ENCODE measurements at regions of chr11 and their contacts with region 1.

Region 1: DNA sequence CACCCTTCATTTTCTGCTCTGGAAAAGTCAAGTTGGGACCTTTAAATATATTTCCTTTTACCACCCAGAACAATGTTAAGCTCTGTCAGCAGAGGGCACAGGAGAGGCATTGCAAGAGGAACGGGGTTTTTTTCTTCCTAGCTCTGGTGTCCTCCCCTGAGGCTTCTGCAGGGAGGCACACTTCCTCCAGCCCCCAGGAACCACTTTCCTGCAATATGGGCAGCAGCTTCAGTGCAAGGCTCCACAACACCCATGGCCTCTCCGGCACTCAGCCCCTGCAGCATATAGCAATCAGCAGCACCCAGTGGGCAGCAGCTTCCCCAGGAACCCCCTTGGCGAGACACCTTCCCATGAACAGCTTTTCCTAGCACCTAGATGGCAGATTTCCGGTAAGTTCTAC is 101.4 kb downstream of the SYT9 start:
- DNase-seq: peak; percentile 11 to 28 (median 16)
- ATAC-seq: peak; percentile 64; the same call in 2 of the 3 replicates
- H3K4me3 ChIP-seq: no peak overlapping the region
- H3K27ac ChIP-seq: no peak overlapping the region
- H3K4me1 ChIP-seq: no peaks in the 10 kb centered on the region
- H3K27me3 ChIP-seq: no peaks in the 10 kb centered on the region
- CTCF ChIP-seq: peak; percentile 39 to 59 (median 53); a peak in 5 of 6 replicates
- EP300 ChIP-seq: no peak
- POLR2A ChIP-seq: no peak
- RAD21 ChIP-seq: peak; percentile 66 to 72

Region 2: GRCh38 chr11:7341551-7341950 is 11.5 kb before region 1 on chr11:
- CTCF ChIA-PET with region 1: no interaction called
- POLR2A ChIA-PET with region 1: no interaction called
- in situ Hi-C with region 1: no loop called
- intact Hi-C with region 1: no loop called
- DNase-seq: no peak
- ATAC-seq: no peak
- H3K4me3 ChIP-seq: no peak overlapping the region
- H3K27ac ChIP-seq: no peak overlapping the region
- H3K4me1 ChIP-seq: no peaks in the 10 kb centered on the region
- H3K27me3 ChIP-seq: no peaks in the 10 kb centered on the region
- CTCF ChIP-seq: no peak
- EP300 ChIP-seq: no peak
- POLR2A ChIP-seq: no peak
- RAD21 ChIP-seq: no peak

Region 3: DNA sequence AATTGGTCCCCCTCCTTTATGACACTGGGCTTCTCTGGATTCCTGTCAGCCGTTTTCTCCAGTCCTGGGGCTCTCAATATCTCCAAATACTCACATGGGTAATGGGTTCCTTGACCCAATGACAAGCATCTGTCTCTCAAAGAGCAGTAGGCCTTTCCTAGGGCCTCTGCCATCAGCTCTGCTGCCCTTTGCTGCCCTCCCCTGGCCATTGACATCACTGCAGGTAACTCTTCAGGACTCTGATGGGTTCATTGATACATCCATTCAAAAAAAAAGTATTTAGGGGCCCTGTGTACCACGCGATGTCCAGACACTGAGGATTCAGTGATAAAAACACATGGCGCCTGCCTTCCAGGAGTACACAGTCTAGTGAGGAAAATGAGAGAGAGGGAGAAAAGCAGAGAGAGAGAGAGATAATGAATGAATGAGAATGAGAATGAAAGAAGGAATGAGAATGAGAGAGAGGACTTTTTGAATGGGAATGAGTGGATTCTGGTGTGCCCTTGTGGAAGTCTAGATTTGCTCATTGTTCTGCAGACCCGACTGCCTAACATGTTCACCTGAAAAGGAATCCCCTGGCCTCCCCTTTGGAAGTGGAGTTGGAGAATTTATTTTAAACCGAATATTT is 89.6 kb after region 1 on chr11:
- CTCF ChIA-PET with region 1: interaction called, 3 read pairs
- POLR2A ChIA-PET with region 1: no interaction called
- in situ Hi-C with region 1: no loop called
- intact Hi-C with region 1: loop called (anchors 1 kb)
- DNase-seq: peak; percentile 59 to 75 (median 68)
- ATAC-seq: peak; percentile 93
- H3K4me3 ChIP-seq: no peak overlapping the region
- H3K27ac ChIP-seq: no peak overlapping the region
- H3K4me1 ChIP-seq: no peaks in the 10 kb centered on the region
- H3K27me3 ChIP-seq: no peaks in the 10 kb centered on the region; a peak in 1 of 5 replicates
- CTCF ChIP-seq: peak; percentile 71 to 83 (median 83)
- EP300 ChIP-seq: no peak
- POLR2A ChIP-seq: no peak
- RAD21 ChIP-seq: peak; percentile 79 to 86

Measured in K562 (cell line).